AG04449 (cell line): ENCODE measurements at regions of chr1 and their contacts with region 1.

Region 1: GRCh38 chr1:8560611-8561544 is 243.0 kb downstream of the SLC45A1 start:
- DNase-seq: no peak
- H3K4me3 ChIP-seq: no peak overlapping the region
- CTCF ChIP-seq: peak; percentile 71

Region 2: DNA sequence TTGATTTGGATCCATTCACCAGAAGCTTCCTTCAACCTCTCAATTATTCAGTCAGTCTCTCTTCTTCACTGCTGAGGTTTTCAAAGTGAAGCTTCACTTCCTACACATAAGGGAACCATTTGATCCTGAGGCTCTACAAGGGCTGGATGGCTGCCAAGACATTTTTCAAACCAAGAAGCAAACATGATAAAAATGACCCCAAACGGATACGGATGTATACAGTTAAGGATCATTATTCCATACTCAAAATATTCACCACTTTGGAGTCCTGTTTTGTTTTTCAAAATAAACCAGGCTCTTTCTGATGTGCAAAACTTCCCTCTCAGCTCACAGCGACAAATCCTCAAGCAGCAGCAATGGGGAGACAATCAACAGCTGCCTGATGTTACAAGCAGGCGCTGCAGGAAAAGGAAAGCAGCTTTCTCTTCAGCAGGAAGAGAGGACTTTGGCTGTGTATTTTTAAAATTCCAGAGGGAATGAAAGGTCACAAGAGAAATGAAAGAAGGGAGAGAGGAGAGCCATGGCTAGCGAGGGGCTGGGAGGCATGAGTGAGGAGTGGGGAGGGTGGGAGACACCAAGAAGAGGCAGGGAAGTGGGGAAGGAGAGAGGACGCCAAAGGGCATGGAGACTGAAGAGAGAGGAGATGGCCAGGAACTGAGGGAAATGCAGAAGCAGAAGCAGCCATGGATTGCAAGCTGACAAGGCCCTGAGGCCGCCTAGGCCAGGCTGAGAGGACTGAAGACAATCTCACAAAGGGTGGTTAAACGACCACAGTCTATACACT is 97.5 kb before region 1 on chr1:
- CTCF ChIA-PET with region 1: no interaction called
- POLR2A ChIA-PET with region 1: no interaction called
- DNase-seq: no peak
- H3K4me3 ChIP-seq: peak overlapping the region; percentile 23
- CTCF ChIP-seq: no peak

Region 3: DNA sequence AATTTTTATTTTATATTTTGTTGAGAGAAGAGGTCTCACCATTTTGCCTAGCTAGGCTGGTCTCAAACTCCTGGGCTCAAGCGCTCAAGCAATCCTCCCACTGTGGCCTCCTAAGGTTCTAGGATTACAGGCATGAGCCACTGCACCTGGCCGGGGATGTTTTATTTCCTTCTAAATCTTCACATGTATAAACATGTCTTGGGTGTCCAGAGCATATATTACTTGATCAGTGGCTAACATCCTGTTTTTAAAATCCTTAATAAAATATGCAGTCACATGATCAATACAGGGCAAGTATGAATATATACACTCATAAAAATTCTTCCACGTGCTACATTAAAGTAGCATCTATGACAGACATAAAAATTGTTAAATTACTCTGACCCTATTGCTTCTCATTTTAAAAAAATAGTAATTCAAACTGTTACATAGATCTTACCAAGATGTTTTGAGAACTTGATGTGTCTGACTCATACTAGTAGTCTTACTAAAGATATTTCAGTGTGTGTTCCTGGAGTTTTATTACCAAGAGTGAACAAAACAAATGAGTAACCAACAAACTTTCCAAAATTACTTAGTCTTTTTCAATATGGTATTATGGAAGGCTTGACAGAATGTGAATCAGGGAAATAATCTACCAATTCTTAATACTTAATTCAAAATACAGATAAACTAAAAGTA is 20.5 kb before region 1 on chr1:
- CTCF ChIA-PET with region 1: interaction called, 22 read pairs
- POLR2A ChIA-PET with region 1: no interaction called
- DNase-seq: no peak
- H3K4me3 ChIP-seq: no peak overlapping the region
- CTCF ChIP-seq: no peak

Region 4: DNA sequence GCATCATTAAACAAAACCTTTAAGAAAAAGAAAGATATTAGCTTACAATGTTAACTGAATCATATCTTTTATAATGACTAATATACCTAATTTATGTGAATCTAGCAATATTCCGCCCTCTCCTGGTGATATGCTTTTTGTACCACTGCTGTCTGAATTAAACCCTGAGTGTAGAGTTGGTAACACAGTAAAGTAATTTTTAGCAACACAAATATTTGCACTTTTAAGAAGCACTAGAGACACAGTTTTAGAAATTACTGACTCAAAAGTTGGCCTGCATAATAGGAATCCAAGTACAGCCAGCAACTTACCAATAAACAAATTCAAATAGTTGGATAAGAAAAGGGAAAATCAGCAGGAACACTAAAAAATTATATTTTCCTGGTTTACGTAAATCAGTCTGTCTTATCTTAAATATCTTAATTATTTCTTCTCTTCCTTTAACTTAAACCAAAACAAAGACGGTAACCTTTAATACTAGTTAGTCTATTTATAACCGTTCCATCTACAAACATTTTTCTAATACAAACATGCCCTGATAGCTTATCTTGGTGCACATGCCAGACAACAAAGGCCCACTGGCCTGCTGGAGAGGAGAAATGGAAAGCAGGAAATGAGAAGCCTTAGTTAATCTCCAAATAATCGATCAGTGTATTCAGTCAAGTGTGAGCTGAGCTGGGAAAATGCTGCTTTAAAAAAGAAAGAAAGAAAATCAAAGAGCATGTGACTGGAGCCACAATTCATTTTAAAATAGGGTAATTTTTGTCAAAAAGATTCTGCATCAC is 10.5 kb after region 1 on chr1:
- CTCF ChIA-PET with region 1: interaction called, 60 read pairs
- POLR2A ChIA-PET with region 1: no interaction called
- DNase-seq: no peak
- H3K4me3 ChIP-seq: no peak overlapping the region
- CTCF ChIP-seq: peak; percentile 9

Region 5: DNA sequence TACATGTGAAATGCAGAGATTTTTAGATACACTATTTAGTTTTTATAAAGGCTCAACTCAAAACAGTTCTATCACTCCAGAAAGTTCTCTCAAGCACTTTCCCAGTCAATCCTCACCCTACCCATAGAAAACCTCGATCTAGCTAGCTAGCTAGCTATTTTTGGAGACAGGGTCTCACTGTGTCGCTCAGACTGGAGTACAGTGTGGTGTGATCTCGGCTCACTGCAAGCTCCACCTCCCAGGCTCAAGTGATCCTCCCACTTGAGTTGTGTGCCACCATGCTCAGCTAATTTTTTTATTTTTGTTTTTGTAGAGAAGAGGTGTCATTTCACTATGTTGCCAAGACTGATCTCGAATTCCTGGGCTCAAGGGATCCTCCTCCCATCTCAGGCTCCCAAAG is 19.7 kb after region 1 on chr1:
- CTCF ChIA-PET with region 1: interaction called, 16 read pairs
- POLR2A ChIA-PET with region 1: no interaction called
- DNase-seq: no peak
- H3K4me3 ChIP-seq: no peak overlapping the region
- CTCF ChIP-seq: no peak

Region 6: DNA sequence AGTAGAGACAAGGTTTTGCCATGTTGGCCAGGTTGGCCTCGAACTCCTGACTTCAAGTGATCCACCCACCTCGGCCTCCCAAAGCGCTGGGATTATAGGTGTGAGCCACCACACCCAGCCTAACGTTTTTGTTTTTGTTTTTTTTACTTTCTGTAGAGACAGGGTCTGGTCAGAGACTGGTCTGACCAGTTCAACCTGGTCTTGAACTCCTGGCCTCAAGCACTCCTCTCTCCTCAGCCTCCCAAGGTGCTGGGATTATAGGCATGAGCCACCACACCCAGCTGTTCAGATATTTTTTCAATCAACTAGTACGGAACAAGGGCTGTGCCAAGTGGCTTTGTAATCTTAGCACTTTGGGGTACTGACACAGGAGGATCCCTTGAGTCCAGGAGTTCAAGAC is 47.0 kb after region 1 on chr1:
- CTCF ChIA-PET with region 1: no interaction called
- POLR2A ChIA-PET with region 1: no interaction called
- DNase-seq: no peak
- H3K4me3 ChIP-seq: no peak overlapping the region
- CTCF ChIP-seq: no peak

Region 7: GRCh38 chr1:8702850-8703810 is 142.3 kb after region 1 on chr1:
- CTCF ChIA-PET with region 1: interaction called, 15 read pairs
- POLR2A ChIA-PET with region 1: interaction called, 3 read pairs
- DNase-seq: no peak
- H3K4me3 ChIP-seq: peak overlapping the region; percentile 59
- CTCF ChIP-seq: peak; percentile 24

Region 8: DNA sequence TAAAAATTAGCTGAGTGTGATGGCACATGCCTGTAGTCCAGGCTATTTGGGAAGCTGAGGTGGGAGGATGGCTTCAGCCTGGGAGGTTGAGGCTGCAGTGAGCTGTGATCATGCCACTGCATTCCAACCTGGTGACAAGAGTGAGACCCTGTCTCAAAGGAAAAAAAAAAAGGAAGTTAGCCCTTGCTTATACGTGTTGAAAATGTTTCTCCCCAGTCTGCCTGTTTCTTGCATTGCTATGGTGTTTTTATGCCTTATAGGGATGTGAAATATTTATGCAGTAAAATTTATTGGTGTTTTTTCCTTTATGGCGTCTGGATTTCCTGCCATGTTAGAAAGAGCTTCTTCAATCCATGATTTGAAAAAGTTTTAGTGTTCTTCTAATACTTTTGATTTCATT is 260.2 kb after region 1 on chr1:
- CTCF ChIA-PET with region 1: no interaction called
- POLR2A ChIA-PET with region 1: no interaction called
- DNase-seq: no peak
- H3K4me3 ChIP-seq: no peak overlapping the region
- CTCF ChIP-seq: no peak